Astrocyte of the cerebellum (primary cell): ENCODE measurements at regions of chr10 and their contacts with region 1.

Region 1: GRCh38 chr10:105834261-105835059 is 1193.4 kb downstream of the SORCS3 start:
- DNase-seq: no peak
- H3K4me3 ChIP-seq: no peak overlapping the region
- CTCF ChIP-seq: no peak

Region 2: DNA sequence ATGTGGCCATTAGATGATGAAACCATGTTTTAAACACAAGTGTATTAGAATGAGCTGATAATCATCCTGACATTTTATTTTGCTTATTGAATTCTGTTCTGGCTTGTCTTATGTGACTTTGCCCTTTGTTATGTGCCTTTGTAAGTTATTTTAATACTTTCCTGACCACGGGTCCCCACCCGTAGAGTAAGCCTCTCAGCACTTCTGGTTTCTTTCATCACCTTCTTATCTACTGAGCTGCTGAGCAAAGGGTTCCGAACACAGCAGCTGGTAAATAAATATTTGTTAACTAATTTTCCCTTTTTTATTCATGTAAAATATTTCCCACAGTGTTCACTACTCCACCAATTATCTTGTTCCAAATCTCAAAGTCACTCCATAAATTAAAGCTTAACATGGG is 78.1 kb before region 1 on chr10:
- in situ Hi-C with region 1: loop called (anchors 5 kb)
- DNase-seq: no peak
- H3K4me3 ChIP-seq: no peak overlapping the region
- CTCF ChIP-seq: no peak

Region 3: DNA sequence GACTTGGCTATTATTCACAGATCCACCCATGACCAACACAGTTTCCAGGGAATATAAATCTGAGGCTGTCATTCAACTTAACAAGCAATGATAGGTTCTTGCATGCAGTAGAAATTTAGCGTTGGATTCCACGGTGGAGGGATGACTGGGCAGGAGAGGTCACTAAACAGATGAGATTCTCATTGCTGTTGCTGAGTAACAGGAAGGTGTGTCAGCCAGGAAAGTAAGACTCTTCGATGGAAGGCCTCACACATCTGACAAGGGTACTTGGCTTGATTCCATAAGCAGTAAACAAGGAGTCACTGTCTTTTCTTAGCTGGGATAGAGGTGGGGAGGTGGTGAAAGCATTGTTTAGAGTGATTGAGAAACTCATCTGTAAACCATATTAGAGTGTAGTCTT is 41.4 kb before region 1 on chr10:
- in situ Hi-C with region 1: no loop called
- DNase-seq: no peak
- H3K4me3 ChIP-seq: no peak overlapping the region
- CTCF ChIP-seq: no peak